Activated T-helper 1 cell treated with anti-CD3 and anti-CD28 coated beads, Interleukin-12 subunit alpha, Interleukin-12 subunit beta, Interleukin-2, Interleukin-4 antibody, amounts not matched to agents 30 ng/mL and 10 ng/mL and 1 ng/mL, durations not matched to agents 14 hours and 24 hours and 36 hours (primary cell): ENCODE measurements at regions of chr15 and their contacts with region 1.

Region 1: DNA sequence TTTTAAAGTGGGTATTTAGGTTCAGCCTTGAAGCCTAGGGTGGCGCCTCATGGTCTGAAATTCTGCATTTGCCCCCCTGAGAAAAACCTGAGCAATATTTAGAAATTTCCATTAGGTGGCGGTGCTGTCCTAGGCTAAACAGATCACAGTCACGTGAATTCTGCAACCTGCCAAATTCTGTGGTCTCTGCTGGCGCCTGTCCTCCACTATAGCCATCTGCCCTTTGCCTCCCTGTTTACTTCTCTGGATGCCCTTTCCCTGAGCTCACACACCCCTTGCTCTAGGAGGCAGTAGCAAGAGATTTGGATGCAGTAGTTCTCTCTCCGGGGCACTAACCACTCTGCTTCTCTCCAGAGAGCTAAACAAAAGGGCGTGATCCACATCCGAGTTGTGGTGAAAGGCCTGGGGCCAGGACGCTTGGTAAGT is 9.1 kb downstream of the MRPS11 start:
- DNase-seq: no peak
- H3K4me3 Mint-ChIP-seq: no peak overlapping the region
- H3K27ac Mint-ChIP-seq: no peak overlapping the region
- H3K4me1 Mint-ChIP-seq: peaks cover 11% of the 10 kb centered on the region
- H3K27me3 Mint-ChIP-seq: no peaks in the 10 kb centered on the region

Region 2: DNA sequence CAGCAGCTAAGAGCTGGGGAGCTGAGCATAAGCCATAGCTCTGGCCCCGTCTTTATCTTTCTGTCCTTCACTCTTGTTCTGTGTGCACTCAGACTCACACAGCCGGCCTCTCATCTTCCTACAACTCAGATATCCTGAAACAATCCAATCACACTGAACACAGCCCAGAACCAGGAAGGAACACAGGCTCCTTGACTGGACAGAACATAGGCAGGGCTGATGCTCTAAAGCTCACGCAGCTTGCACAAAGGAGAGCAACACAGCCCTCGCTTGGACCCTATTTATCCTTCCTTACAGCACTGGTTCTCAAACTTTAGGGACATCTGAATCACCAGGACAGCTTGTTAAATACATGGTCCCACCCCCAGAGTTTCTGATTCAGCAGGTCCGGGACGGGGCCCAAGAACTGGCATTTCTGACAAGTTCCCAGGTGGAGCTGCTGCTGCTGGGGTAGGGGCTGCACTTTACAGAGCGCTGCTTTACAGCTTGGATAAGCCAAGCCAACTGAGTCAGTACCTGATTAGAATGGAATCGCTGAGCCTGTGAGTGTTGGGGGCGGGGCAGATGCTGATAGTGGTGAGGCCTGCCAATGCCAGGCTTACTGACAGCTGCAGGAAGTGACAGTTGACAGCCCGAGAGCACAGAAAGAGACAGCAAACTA is 74.5 kb before region 1 on chr15:
- intact Hi-C with region 1: no loop called
- DNase-seq: no peak
- H3K4me3 Mint-ChIP-seq: no peak overlapping the region
- H3K27ac Mint-ChIP-seq: no peak overlapping the region
- H3K4me1 Mint-ChIP-seq: no peaks in the 10 kb centered on the region
- H3K27me3 Mint-ChIP-seq: peaks cover 5% of the 10 kb centered on the region

Region 3: GRCh38 chr15:88664151-88664778 is 187.6 kb after region 1 on chr15:
- intact Hi-C with region 1: loop called (anchors 1 kb)
- DNase-seq: no peak
- H3K4me3 Mint-ChIP-seq: no peak overlapping the region
- H3K27ac Mint-ChIP-seq: no peak overlapping the region
- H3K4me1 Mint-ChIP-seq: peaks cover 5% of the 10 kb centered on the region
- H3K27me3 Mint-ChIP-seq: peaks cover 10% of the 10 kb centered on the region